ENCODE measurements at regions of chr11 and their contacts with region 1.

Region 1: GRCh38 chr11:114262681-114263512 is 33.3 kb upstream of the NNMT start:
- DNase-seq: no peak
- H3K4me3 ChIP-seq: no peak overlapping the region
- H3K27ac ChIP-seq: no peak overlapping the region
- H3K4me1 ChIP-seq: peaks cover 45% of the 10 kb centered on the region
- H3K27me3 ChIP-seq: no peaks in the 10 kb centered on the region
- CTCF ChIP-seq: peak in 2 of 3 experiments; percentile 23 to 26
- POLR2A ChIP-seq: no peak

Region 2: DNA sequence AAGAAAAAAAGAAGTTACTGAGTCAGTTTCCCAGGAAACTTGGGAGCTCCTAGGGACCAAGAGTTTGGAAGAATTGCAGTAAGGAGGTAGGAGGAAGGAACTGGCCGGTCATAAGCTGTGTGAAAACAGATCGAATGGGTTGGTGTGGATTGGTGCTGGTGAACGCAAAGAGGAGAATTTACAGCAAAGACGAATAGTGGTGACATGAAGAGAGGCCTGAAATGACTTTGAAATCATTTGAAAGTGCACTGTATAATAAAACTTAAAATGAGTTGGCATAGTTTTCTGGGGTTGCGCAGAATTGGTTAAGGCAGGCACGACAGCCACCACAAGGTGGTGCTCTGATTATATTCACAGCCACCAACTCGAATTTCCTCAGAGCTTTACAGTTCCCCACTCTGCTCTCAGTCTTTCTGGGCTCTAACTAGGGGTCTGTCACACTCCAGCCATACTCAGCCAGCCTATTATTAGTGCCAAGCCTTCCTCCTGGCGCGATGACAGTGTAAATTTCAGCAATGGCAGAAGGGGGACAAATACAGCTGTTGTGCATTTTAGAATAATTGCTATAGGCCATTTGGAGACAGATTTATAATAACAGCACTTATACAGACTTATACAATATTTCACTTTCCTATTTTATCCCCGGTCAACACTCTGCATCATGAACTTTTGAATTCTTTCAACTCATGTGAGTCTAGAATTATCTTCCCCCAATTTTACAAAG is 366.6 kb before region 1 on chr11:
- intact Hi-C with region 1: loop called (anchors 5 kb)
- DNase-seq: no peak
- H3K4me3 ChIP-seq: no peak overlapping the region
- H3K27ac ChIP-seq: no peak overlapping the region
- H3K4me1 ChIP-seq: no peaks in the 10 kb centered on the region
- H3K27me3 ChIP-seq: no peaks in the 10 kb centered on the region
- CTCF ChIP-seq: peak; percentile 19 to 57 (median 52)
- POLR2A ChIP-seq: no peak

Region 3: GRCh38 chr11:114036156-114036811 is 226.6 kb before region 1 on chr11:
- intact Hi-C with region 1: loop called (anchors 5 kb)
- DNase-seq: no peak
- H3K4me3 ChIP-seq: peak overlapping the region; percentile 43 to 47
- H3K27ac ChIP-seq: peak overlapping the region; percentile 83
- H3K4me1 ChIP-seq: peaks cover 32% of the 10 kb centered on the region
- H3K27me3 ChIP-seq: no peaks in the 10 kb centered on the region
- CTCF ChIP-seq: peak; percentile 71 to 85 (median 83)
- POLR2A ChIP-seq: no peak

Region 4: DNA sequence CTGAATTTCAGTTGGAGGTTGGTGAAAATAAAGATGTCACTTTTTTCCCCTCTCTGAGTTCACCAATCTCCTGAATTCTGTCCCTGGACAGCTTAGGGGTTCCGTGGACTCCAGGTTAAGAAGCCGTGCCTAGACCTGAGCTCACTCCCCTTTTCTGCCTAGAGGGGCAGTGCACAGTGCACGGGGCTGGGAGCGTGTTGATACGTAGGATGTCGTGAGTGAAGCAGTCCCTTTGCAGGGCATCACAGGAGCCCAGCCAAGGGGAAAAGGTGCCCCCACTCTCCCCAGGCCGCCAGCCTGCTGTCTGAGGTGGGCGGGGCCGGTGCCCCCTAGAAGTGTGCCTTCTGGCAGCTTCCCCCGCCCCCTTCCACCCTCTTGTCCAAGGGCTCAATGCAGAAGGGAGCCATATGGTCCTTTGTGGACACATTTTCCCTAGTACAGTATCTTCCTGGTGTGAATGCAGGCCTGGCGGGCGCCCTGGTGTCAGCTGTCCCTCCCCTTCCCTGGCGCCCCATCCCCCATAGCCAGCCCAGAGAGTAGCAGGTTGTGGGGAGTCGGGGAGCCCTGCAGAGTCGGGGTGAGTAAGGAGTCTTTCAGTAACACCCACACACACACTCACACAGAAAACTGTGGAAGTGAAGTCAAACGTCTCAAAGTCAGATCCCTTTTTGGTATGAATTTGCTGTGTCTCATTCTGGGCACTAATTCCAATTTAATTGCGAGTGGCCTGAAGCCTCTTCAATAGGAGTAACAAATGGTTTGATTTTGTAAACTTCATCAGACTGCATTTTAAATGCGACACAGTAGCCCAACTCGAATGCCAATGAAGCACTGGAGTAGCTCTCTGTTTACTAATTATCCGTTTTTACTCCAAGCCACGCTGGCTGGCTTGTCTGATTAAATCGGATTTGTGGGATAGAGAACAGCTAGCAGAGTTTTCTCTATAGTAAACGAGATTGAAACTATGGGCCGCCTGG is 34.2 kb before region 1 on chr11:
- intact Hi-C with region 1: no loop called
- DNase-seq: no peak
- H3K4me3 ChIP-seq: no peak overlapping the region
- H3K27ac ChIP-seq: no peak overlapping the region
- H3K4me1 ChIP-seq: peaks cover 35% of the 10 kb centered on the region
- H3K27me3 ChIP-seq: no peaks in the 10 kb centered on the region
- CTCF ChIP-seq: no peak
- POLR2A ChIP-seq: no peak

Region 5: GRCh38 chr11:114719562-114719961 is 456.7 kb after region 1 on chr11:
- intact Hi-C with region 1: no loop called
- DNase-seq: no peak
- H3K4me3 ChIP-seq: no peak overlapping the region
- H3K27ac ChIP-seq: no peak overlapping the region
- H3K4me1 ChIP-seq: no peaks in the 10 kb centered on the region
- H3K27me3 ChIP-seq: no peaks in the 10 kb centered on the region
- CTCF ChIP-seq: no peak
- POLR2A ChIP-seq: no peak

Region 6: GRCh38 chr11:114909866-114910265 is 647.0 kb after region 1 on chr11:
- intact Hi-C with region 1: no loop called
- DNase-seq: no peak
- H3K4me3 ChIP-seq: no peak overlapping the region
- H3K27ac ChIP-seq: no peak overlapping the region
- H3K4me1 ChIP-seq: no peaks in the 10 kb centered on the region
- H3K27me3 ChIP-seq: no peaks in the 10 kb centered on the region
- CTCF ChIP-seq: no peak
- POLR2A ChIP-seq: no peak

Measured in vagina (tissue), 2 donors.